ENCODE measurements at regions of chr3 and their contacts with region 1.

Region 1: GRCh38 chr3:25648107-25648535 is 16.6 kb downstream of the TOP2B start:
- DNase-seq: peak; percentile 90
- ATAC-seq: peak; percentile 93
- H3K4me3 Mint-ChIP-seq: no peak overlapping the region
- H3K27ac Mint-ChIP-seq: no peak overlapping the region
- H3K4me1 Mint-ChIP-seq: peaks cover 48% of the 10 kb centered on the region
- H3K27me3 Mint-ChIP-seq: no peaks in the 10 kb centered on the region

Region 2: DNA sequence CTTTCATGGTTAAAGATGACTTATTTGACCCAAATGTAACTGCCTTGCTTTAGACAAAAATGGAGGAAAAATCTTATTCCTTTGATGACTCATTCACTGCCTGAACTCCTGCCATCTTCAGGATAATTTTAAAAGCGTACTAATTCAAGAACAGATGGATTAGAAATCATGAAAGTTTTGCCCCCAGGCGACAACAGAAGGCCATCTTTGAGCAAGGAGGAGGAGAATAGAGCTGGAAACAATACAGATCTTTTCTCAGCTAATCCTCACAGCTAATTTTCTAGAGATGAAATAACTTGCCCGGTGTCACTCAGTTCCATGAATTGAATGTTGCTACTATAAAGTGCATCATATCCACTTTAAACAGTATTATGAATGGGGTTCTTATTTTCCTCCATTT is 544.7 kb before region 1 on chr3:
- CTCF ChIA-PET with region 1: no interaction called
- POLR2A ChIA-PET with region 1: no interaction called
- intact Hi-C with region 1: no loop called
- DNase-seq: no peak
- ATAC-seq: no peak
- H3K4me3 Mint-ChIP-seq: no peak overlapping the region
- H3K27ac Mint-ChIP-seq: no peak overlapping the region
- H3K4me1 Mint-ChIP-seq: no peaks in the 10 kb centered on the region
- H3K27me3 Mint-ChIP-seq: no peaks in the 10 kb centered on the region

Region 3: GRCh38 chr3:25281041-25281731 is 366.9 kb before region 1 on chr3:
- CTCF ChIA-PET with region 1: no interaction called
- POLR2A ChIA-PET with region 1: no interaction called
- intact Hi-C with region 1: no loop called
- DNase-seq: no peak
- ATAC-seq: no peak
- H3K4me3 Mint-ChIP-seq: no peak overlapping the region
- H3K27ac Mint-ChIP-seq: no peak overlapping the region
- H3K4me1 Mint-ChIP-seq: no peaks in the 10 kb centered on the region
- H3K27me3 Mint-ChIP-seq: peaks cover under 1% of the 10 kb centered on the region

Region 4: GRCh38 chr3:25427942-25428788 is 220.0 kb before region 1 on chr3 and contains the start of gene RARB:
- CTCF ChIA-PET with region 1: no interaction called
- POLR2A ChIA-PET with region 1: no interaction called
- intact Hi-C with region 1: no loop called
- DNase-seq: peak; percentile 15
- ATAC-seq: peak; percentile 49
- H3K4me3 Mint-ChIP-seq: no peak within 1 kb of the TSS
- H3K27ac Mint-ChIP-seq: no peak within 1 kb of the TSS
- H3K4me1 Mint-ChIP-seq: peaks cover 6% of the 10 kb centered on the region
- H3K27me3 Mint-ChIP-seq: peaks cover 37% of the 10 kb centered on the region
- total RNA-seq, gene RARB: not detected

Region 5: DNA sequence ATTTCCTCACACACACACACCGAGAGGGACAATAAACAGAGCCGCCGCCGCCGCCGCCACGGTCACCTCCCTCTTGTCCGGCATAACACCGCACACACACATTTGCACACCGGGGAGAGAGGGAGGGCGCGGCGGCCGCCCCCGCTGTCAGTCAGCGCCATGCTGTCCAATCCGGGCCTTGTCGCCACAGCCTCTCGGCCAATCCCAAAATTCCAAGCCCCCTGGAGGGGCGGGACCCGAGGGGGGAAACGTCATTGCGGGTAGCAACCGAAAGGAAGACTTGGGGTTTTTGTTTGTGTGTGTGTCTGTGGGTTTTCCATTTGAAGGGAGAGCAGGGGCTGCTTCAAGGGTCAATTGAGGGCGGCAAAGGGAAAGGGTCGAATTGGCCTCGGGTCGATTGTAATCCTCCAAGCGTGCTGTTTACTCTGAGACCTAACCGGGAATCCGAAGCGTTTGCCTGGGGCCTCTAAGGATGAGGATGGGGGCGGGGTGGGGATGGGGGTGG is 16.7 kb after region 1 on chr3 and contains the start of gene TOP2B:
- CTCF ChIA-PET with region 1: interaction called, 23 read pairs
- POLR2A ChIA-PET with region 1: interaction called, 4 read pairs
- intact Hi-C with region 1: loop called in 1 of 2 experiments (anchors 1 kb)
- DNase-seq: peak; percentile 96
- ATAC-seq: peak; percentile 93
- H3K4me3 Mint-ChIP-seq: peak within 1 kb of the TSS; percentile 83
- H3K27ac Mint-ChIP-seq: peak within 1 kb of the TSS; percentile 100
- H3K4me1 Mint-ChIP-seq: peaks cover 44% of the 10 kb centered on the region
- H3K27me3 Mint-ChIP-seq: no peaks in the 10 kb centered on the region
- total RNA-seq, gene TOP2B: 132 to 156 TPM

Region 6: GRCh38 chr3:25856902-25857518 is 208.9 kb after region 1 on chr3:
- CTCF ChIA-PET with region 1: interaction called, 116 read pairs
- POLR2A ChIA-PET with region 1: interaction called, 5 read pairs
- intact Hi-C with region 1: loop called (anchors 1 kb)
- DNase-seq: no peak
- ATAC-seq: peak; percentile 88
- H3K4me3 Mint-ChIP-seq: no peak overlapping the region
- H3K27ac Mint-ChIP-seq: no peak overlapping the region
- H3K4me1 Mint-ChIP-seq: no peaks in the 10 kb centered on the region
- H3K27me3 Mint-ChIP-seq: no peaks in the 10 kb centered on the region

Region 7: GRCh38 chr3:25910997-25911396 is 262.9 kb after region 1 on chr3:
- CTCF ChIA-PET with region 1: interaction called, 5 read pairs
- POLR2A ChIA-PET with region 1: no interaction called
- intact Hi-C with region 1: loop called (anchors 1 to 2 kb)
- DNase-seq: peak; percentile 79
- ATAC-seq: peak; percentile 39
- H3K4me3 Mint-ChIP-seq: no peak overlapping the region
- H3K27ac Mint-ChIP-seq: no peak overlapping the region
- H3K4me1 Mint-ChIP-seq: peaks cover 16% of the 10 kb centered on the region
- H3K27me3 Mint-ChIP-seq: peaks cover 3% of the 10 kb centered on the region

Region 8: GRCh38 chr3:26712211-26713026 is 1064.3 kb after region 1 on chr3:
- CTCF ChIA-PET with region 1: interaction called, 3 read pairs
- POLR2A ChIA-PET with region 1: no interaction called
- intact Hi-C with region 1: loop called (anchors 2 to 5 kb)
- DNase-seq: peak; percentile 5
- ATAC-seq: no peak
- H3K4me3 Mint-ChIP-seq: no peak overlapping the region
- H3K27ac Mint-ChIP-seq: no peak overlapping the region
- H3K4me1 Mint-ChIP-seq: no peaks in the 10 kb centered on the region
- H3K27me3 Mint-ChIP-seq: no peaks in the 10 kb centered on the region